Naive thymus-derived CD4-positive, alpha-beta T cell (primary cell): ENCODE measurements at regions of chr5 and their contacts with region 1.

Region 1: DNA sequence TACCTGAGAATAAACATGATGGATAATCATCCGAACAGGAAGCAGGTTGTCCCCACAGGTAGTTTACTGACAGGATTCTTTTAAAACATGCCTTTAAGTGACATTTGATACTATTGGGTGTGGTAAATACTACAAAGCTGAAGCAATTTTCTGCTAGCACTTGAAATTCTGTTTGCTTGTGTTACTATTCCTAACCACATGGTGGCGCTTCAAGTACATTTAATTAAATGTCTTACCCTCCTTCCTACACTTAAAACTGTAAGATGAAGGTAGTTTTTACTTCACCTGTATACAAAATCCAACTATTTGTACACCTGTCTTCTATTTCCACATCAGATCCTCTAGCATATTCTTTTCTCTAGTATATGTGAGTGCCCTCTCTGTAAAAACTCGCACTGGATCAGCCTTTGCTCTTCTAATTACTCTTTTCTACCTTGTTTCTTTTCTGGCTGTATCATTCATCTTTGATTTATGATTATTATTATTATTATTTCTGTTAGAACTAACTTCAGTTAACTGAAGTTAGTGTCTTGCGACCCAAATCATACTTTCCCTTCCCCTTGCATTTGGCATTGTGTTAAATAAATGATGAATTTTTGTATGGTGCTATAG is 18.4 kb downstream of the SLC25A46 start:
- DNase-seq: peak in 5 of 9 donors; percentile 21 to 45 (median 33)
- ATAC-seq: peak; percentile 45
- H3K4me3 ChIP-seq: no peak overlapping the region
- H3K4me3 Mint-ChIP-seq: no peak overlapping the region
- H3K27ac ChIP-seq: no peak overlapping the region
- H3K27ac Mint-ChIP-seq: no peak overlapping the region
- H3K4me1 ChIP-seq: peaks cover 0 to 4% of the 10 kb centered on the region in 2 donors
- H3K4me1 Mint-ChIP-seq: peaks cover 7 to 30% (median 11%) of the 10 kb centered on the region in 7 donors
- H3K27me3 ChIP-seq: no peaks in the 10 kb centered on the region
- H3K27me3 Mint-ChIP-seq: no peaks in the 10 kb centered on the region

Region 2: GRCh38 chr5:110865400-110866094 is 108.3 kb after region 1 on chr5:
- CTCF ChIA-PET with region 1: no interaction called
- POLR2A ChIA-PET with region 1: no interaction called
- intact Hi-C with region 1: loop called in 1 of 2 experiments (anchors 1 kb)
- DNase-seq: no peak
- ATAC-seq: no peak
- H3K4me3 ChIP-seq: no peak overlapping the region
- H3K4me3 Mint-ChIP-seq: no peak overlapping the region
- H3K27ac ChIP-seq: no peak overlapping the region
- H3K27ac Mint-ChIP-seq: no peak overlapping the region
- H3K4me1 ChIP-seq: no peaks in the 10 kb centered on the region
- H3K4me1 Mint-ChIP-seq: no peaks in the 10 kb centered on the region
- H3K27me3 ChIP-seq: no peaks in the 10 kb centered on the region
- H3K27me3 Mint-ChIP-seq: peaks cover 0 to 23% (median 6%) of the 10 kb centered on the region in 5 donors

Region 3: GRCh38 chr5:111092062-111092853 is 335.0 kb after region 1 on chr5 and contains the start of gene WDR36:
- CTCF ChIA-PET with region 1: no interaction called
- POLR2A ChIA-PET with region 1: no interaction called
- intact Hi-C with region 1: loop called (anchors 2 kb)
- DNase-seq: peak; percentile 80 to 95 (median 87)
- ATAC-seq: peak; percentile 99
- H3K4me3 ChIP-seq: peak within 1 kb of the TSS; percentile 88
- H3K4me3 Mint-ChIP-seq: peak within 1 kb of the TSS; percentile 91 to 99 (median 98)
- H3K27ac ChIP-seq: peak within 1 kb of the TSS; percentile 82
- H3K27ac Mint-ChIP-seq: peak within 1 kb of the TSS; percentile 66 to 98 (median 94)
- H3K4me1 ChIP-seq: peaks cover 11 to 20% of the 10 kb centered on the region in 2 donors
- H3K4me1 Mint-ChIP-seq: peaks cover 22 to 49% (median 39%) of the 10 kb centered on the region in 7 donors
- H3K27me3 ChIP-seq: no peaks in the 10 kb centered on the region
- H3K27me3 Mint-ChIP-seq: peaks cover 0 to 12% (median 5%) of the 10 kb centered on the region in 5 donors
- total RNA-seq, gene WDR36: 24.8 to 37.4 (median 29.7) TPM

Region 4: GRCh38 chr5:111486055-111486454 is 728.8 kb after region 1 on chr5:
- CTCF ChIA-PET with region 1: no interaction called
- POLR2A ChIA-PET with region 1: no interaction called
- intact Hi-C with region 1: loop called in 1 of 2 experiments (anchors 5 kb)
- DNase-seq: no peak
- ATAC-seq: no peak
- H3K4me3 ChIP-seq: no peak overlapping the region
- H3K4me3 Mint-ChIP-seq: no peak overlapping the region
- H3K27ac ChIP-seq: no peak overlapping the region
- H3K27ac Mint-ChIP-seq: peak overlapping the region in 6 of 9 donors; percentile 17 to 80 (median 50)
- H3K4me1 ChIP-seq: no peaks in the 10 kb centered on the region
- H3K4me1 Mint-ChIP-seq: peaks cover 0 to 8% (median 0%) of the 10 kb centered on the region in 7 donors
- H3K27me3 ChIP-seq: no peaks in the 10 kb centered on the region
- H3K27me3 Mint-ChIP-seq: no peaks in the 10 kb centered on the region

Region 5: DNA sequence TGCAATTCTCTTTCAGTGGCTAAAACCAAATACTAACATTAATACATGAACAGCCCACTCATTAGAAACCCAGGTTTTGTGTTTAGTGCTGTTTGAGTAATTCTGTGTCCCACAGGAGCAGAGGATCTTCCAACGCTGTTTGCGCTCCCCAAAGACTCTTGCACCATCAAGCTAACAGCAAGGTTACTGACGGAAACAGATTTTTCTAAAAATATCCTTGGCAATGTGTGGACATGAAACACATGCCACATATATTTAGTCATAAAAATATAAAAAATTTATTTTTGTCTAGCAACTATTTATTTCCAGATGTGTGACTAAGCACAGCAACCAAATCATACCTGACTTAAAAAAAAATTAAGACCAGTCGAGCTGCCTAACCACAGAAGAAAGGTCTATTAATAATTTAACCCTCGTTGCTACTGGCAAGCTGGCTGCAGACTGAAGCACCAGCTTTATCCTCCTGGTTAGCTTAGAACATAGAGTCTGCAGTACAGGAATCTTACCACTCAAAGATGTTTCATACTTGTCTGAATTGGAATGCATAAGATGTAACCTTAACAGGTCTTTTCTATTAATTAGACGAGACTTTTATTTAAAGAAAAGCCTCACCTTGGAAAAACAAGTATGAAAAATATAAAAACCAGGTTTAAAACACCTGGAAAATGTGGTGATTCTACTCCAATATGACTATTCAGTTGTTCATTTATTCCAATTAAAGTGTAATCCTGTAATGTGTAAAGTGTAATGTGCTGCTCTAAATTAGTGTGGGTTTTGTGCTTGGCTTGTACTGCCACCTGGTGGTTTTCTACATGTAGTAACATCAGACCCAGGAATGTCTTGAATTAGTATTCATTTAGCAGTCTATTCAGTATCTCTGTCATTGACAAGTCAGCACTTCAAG is 1389.4 kb after region 1 on chr5:
- CTCF ChIA-PET with region 1: no interaction called
- POLR2A ChIA-PET with region 1: no interaction called
- intact Hi-C with region 1: loop called in 1 of 2 experiments (anchors 1 kb)
- DNase-seq: peak in 8 of 9 donors; percentile 32 to 75 (median 62)
- ATAC-seq: peak; percentile 97
- H3K4me3 ChIP-seq: no peak overlapping the region
- H3K4me3 Mint-ChIP-seq: no peak overlapping the region
- H3K27ac ChIP-seq: no peak overlapping the region
- H3K27ac Mint-ChIP-seq: no peak overlapping the region
- H3K4me1 ChIP-seq: no peaks in the 10 kb centered on the region
- H3K4me1 Mint-ChIP-seq: no peaks in the 10 kb centered on the region
- H3K27me3 ChIP-seq: peaks cover 0 to 3% of the 10 kb centered on the region in 2 donors
- H3K27me3 Mint-ChIP-seq: peaks cover 8 to 17% (median 9%) of the 10 kb centered on the region in 5 donors